Breast epithelium (tissue), 4 donors: ENCODE measurements at regions of chr4 and their contacts with region 1.

Region 1: DNA sequence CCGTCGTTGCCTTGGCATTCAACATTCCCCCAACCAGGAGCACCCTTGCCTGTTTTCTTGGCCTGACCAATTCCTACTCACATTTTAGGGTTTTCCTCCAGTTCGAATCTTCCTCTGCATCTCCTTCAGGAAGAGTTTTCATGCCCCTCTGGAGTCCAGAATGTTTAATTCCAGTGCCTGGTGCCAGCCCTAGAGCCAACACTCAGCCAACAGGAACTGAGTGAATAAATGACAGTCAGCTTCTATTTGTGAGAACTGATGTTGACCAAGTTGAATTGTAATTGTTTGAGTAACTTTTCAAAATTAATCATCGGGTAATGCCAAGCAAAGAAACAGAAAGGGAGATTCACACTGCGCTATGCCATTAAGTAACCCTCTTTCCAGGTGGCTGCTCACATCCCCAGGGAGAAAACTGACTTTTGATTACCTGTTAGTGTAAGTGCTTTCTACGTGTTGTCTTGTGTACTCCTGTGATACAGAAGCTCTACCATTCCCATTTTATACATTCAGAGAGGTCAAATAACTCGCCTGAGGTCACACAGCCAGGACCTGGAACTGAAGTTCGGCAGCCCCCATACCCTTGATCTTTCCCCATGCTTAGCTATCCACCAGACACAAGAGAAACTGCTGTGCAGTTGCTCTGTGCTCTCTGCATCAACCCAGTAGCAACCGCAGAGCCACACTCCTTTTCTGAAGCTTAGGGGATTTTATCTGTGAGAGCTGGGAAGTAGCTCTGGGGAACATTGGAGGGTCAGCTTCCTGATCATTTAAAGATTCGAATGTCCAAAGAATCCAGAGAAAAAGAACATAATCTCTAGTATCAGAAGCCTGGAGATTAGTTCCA is 19.0 kb upstream of the SLC2A9 start:
- DNase-seq: no peak
- H3K4me3 ChIP-seq: no peak overlapping the region
- H3K27ac ChIP-seq: no peak overlapping the region
- H3K4me1 ChIP-seq: no peaks in the 10 kb centered on the region
- H3K27me3 ChIP-seq: no peaks in the 10 kb centered on the region
- CTCF ChIP-seq: no peak
- POLR2A ChIP-seq: no peak

Region 2: DNA sequence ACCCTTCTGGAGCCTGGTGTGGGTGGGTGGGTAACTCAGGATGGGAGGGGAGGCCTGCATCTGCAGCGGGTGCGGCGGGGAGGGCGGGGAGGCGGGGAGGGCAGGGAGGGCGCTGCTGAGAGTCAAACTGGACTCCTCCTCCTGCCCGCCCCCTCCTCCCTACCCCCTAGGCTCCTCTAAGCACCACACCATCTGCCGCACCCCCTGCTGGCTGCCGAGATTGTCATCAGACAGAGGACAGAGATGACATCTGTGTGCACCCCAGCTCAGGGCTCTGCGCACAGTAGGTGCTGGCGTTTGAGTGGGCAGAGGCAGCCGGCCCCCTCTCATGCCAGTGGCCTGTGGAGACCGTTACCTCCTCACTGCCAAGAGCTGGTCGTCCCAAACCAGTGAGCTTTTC is 1158.0 kb before region 1 on chr4:
- intact Hi-C with region 1: loop called (anchors 5 kb)
- DNase-seq: no peak
- H3K4me3 ChIP-seq: no peak overlapping the region
- H3K27ac ChIP-seq: no peak overlapping the region
- H3K4me1 ChIP-seq: no peaks in the 10 kb centered on the region
- H3K27me3 ChIP-seq: peaks cover 0 to 43% of the 10 kb centered on the region in 2 donors
- CTCF ChIP-seq: no peak
- POLR2A ChIP-seq: no peak

Region 3: GRCh38 chr4:10023806-10024205 is 16.5 kb before region 1 on chr4:
- intact Hi-C with region 1: no loop called
- DNase-seq: no peak
- H3K4me3 ChIP-seq: no peak overlapping the region
- H3K27ac ChIP-seq: peak overlapping the region; percentile 40 to 73
- H3K4me1 ChIP-seq: peaks cover 0 to 2% of the 10 kb centered on the region in 2 donors
- H3K27me3 ChIP-seq: no peaks in the 10 kb centered on the region
- CTCF ChIP-seq: no peak
- POLR2A ChIP-seq: no peak